ENCODE measurements at regions of chr17 and their contacts with region 1.

Region 1: GRCh38 chr17:77734341-77735080 is 224.0 kb upstream of the TNRC6C start:
- DNase-seq: peak; percentile 93
- ATAC-seq: peak; percentile 78

Region 2: DNA sequence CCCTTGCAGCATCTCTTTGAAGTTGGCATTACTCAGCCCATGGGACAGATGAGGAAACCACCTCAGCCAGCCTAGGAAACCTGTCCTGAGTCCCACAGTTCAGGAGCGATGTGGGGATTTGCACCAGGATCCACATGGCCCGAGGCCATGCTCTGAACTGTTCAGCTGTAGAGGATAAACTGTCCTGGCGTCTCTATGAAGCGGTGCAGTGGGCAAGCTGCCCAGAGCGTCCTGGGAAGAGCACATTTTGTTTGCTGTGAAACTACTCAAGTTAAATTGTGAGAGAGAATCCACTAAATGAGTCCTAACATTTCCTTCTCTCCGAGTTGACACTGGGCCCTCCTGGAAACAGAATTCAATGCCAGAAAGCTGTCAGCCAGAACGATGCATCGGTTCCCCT is 52.6 kb before region 1 on chr17:
- intact Hi-C with region 1: loop called (anchors 5 kb)
- DNase-seq: peak; percentile 90
- ATAC-seq: peak; percentile 79

Region 3: GRCh38 chr17:77810536-77810935 is 76.0 kb after region 1 on chr17:
- intact Hi-C with region 1: loop called (anchors 5 kb)
- DNase-seq: no peak
- ATAC-seq: peak; percentile 85